ENCODE measurements at regions of chr9 and their contacts with region 1.

Region 1: DNA sequence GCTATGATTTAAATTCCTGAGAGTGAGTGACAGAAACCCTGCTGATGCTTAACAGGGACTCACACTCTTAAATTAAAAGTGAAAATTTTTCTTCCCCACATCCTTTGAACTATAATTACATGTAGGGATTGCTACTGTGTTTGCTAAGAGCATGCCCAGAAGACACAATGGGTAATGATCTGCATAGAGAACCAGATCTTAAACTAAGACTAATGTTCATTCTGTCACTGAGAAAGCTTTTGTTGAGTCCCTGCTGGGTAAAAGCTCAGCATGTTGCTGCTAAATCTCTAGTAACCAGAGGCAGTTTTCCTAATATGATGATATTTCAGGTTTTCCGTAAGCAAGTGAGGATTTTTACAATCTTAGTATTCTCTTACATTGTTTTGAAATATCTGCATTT is 424.8 kb upstream of the SMC2 start:
- DNase-seq: no peak
- ATAC-seq: no peak
- H3K4me3 ChIP-seq: no peak overlapping the region
- H3K27ac ChIP-seq: no peak overlapping the region
- H3K4me1 ChIP-seq: no peaks in the 10 kb centered on the region
- H3K27me3 ChIP-seq: no peaks in the 10 kb centered on the region
- CTCF ChIP-seq: no peak

Region 2: GRCh38 chr9:103372828-103373227 is 296.5 kb before region 1 on chr9:
- intact Hi-C with region 1: no loop called
- DNase-seq: no peak
- ATAC-seq: no peak
- H3K4me3 ChIP-seq: no peak overlapping the region
- H3K27ac ChIP-seq: no peak overlapping the region
- H3K4me1 ChIP-seq: no peaks in the 10 kb centered on the region
- H3K27me3 ChIP-seq: no peaks in the 10 kb centered on the region
- CTCF ChIP-seq: no peak

Region 3: GRCh38 chr9:103586721-103587120 is 82.6 kb before region 1 on chr9:
- intact Hi-C with region 1: no loop called
- DNase-seq: no peak
- ATAC-seq: no peak
- H3K4me3 ChIP-seq: no peak overlapping the region
- H3K27ac ChIP-seq: no peak overlapping the region
- H3K4me1 ChIP-seq: no peaks in the 10 kb centered on the region
- H3K27me3 ChIP-seq: no peaks in the 10 kb centered on the region
- CTCF ChIP-seq: no peak

Region 4: DNA sequence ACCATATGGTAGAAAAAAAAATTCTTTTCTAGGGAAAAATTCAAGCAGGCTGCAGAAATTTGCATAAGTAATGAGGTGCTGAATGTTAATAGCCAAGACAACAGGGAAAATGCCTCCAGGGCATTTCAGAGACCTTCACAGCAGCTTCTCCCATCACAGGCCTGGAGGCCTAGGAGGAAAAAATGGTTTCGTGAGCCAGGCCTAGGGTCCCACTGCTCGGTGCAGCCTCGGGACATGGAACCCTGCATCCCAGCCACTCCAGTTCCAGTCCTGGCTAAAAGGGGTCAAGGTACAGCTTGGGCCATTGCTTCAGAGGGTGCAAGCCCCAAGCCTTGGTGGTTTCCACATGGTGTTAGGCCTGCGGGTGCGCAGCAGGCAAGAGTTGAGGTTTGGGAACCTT is 11.1 kb before region 1 on chr9:
- intact Hi-C with region 1: loop called in 1 of 10 experiments (anchors 2 kb)
- DNase-seq: no peak
- ATAC-seq: no peak
- H3K4me3 ChIP-seq: no peak overlapping the region
- H3K27ac ChIP-seq: no peak overlapping the region
- H3K4me1 ChIP-seq: no peaks in the 10 kb centered on the region
- H3K27me3 ChIP-seq: no peaks in the 10 kb centered on the region
- CTCF ChIP-seq: no peak

Region 5: DNA sequence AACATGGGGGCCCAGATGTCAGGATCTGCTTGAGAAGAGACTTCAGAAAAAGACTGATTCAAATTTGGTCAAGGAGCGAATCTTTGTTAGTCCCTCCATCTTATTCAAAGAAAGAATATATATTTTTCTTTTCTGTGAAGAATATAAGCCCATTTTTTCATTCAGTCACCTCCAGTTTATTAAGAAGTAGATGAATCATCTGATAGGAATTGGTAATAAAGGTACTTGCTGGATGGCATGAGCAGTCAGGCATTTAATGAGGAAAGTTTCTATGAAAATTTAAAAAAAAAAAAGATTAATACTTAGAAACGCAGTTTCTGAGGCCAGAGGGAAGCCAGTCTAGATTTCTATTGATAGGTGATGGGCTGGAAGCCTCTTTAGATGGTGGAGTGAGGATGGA is 51.8 kb after region 1 on chr9:
- intact Hi-C with region 1: no loop called
- DNase-seq: no peak
- ATAC-seq: no peak
- H3K4me3 ChIP-seq: no peak overlapping the region
- H3K27ac ChIP-seq: no peak overlapping the region
- H3K4me1 ChIP-seq: no peaks in the 10 kb centered on the region
- H3K27me3 ChIP-seq: no peaks in the 10 kb centered on the region
- CTCF ChIP-seq: no peak

Measured in heart right ventricle (tissue), 16 donors.